CD4-positive, alpha-beta memory T cell (primary cell): ENCODE measurements at regions of chr14 and their contacts with region 1.

Region 1: GRCh38 chr14:50830932-50831725 is at the start of gene NIN:
- DNase-seq: peak; percentile 66 to 76 (median 74)
- H3K4me3 ChIP-seq: peak within 1 kb of the TSS; percentile 77 to 81
- H3K4me3 Mint-ChIP-seq: peak within 1 kb of the TSS; percentile 95 to 100 (median 97)
- H3K27ac ChIP-seq: peak within 1 kb of the TSS; percentile 62
- H3K27ac Mint-ChIP-seq: peak within 1 kb of the TSS; percentile 92 to 97 (median 96)
- H3K4me1 ChIP-seq: peaks cover 56% of the 10 kb centered on the region
- H3K4me1 Mint-ChIP-seq: peaks cover 45 to 72% (median 53%) of the 10 kb centered on the region in 4 donors
- H3K27me3 ChIP-seq: no peaks in the 10 kb centered on the region
- H3K27me3 Mint-ChIP-seq: no peaks in the 10 kb centered on the region
- total RNA-seq, gene NIN: 99.7 to 102 TPM

Region 2: GRCh38 chr14:50186107-50186506 is 645.0 kb before region 1 on chr14:
- CTCF ChIA-PET with region 1: no interaction called
- POLR2A ChIA-PET with region 1: no interaction called
- intact Hi-C with region 1: no loop called
- DNase-seq: no peak
- H3K4me3 ChIP-seq: no peak overlapping the region
- H3K4me3 Mint-ChIP-seq: no peak overlapping the region
- H3K27ac ChIP-seq: no peak overlapping the region
- H3K27ac Mint-ChIP-seq: no peak overlapping the region
- H3K4me1 ChIP-seq: no peaks in the 10 kb centered on the region
- H3K4me1 Mint-ChIP-seq: peaks cover 0 to 1% (median 0%) of the 10 kb centered on the region in 4 donors
- H3K27me3 ChIP-seq: no peaks in the 10 kb centered on the region
- H3K27me3 Mint-ChIP-seq: no peaks in the 10 kb centered on the region

Region 3: DNA sequence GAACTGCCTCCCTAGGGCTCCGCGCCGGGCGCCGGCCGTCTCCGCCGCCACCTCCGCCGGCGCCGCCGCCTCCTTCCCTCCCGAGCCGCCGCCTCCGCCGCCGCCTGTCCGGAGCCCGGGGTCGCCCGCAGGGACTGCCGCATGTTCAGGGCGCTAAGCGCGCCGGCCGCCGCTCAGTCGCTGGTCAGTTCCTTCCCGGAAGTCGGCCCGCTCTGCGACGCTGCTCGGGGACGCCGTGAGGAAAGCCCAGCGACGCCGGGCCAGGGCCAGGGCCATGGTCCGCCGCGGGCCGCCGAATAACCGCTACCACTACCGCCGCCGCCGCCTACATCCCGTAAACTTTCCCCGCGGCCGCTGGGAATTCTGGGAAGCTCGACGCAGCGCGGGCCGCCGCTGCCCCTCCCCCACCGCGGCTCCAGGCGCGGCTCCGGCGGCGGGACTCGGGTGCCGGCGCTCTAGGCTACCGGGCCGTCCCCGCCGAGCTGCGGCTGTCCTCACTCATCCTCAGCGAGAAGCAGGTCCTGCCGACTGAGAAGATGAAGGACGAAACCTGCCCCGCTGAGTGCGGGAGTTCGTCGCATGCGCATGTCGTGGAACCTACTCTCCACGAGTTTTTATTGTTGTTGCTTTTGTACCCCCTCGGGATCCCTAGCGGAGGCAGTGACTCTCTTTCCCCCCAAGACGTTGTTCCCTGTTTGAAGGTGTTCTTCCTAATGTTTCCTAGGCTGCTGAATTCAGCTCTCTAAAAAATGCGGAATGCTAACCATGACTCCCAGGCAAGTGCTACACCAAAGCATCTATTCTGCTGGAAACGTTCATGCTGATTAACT is 162.9 kb before region 1 on chr14 and contains the start of gene SAV1:
- CTCF ChIA-PET with region 1: no interaction called
- POLR2A ChIA-PET with region 1: no interaction called
- intact Hi-C with region 1: loop called (anchors 5 kb)
- DNase-seq: peak; percentile 41 to 50 (median 45)
- H3K4me3 ChIP-seq: peak within 1 kb of the TSS; percentile 48 to 70
- H3K4me3 Mint-ChIP-seq: peak within 1 kb of the TSS in 2 of 8 donors; percentile 94 to 96
- H3K27ac ChIP-seq: peak within 1 kb of the TSS; percentile 52
- H3K27ac Mint-ChIP-seq: peak within 1 kb of the TSS in 6 of 7 donors; percentile 89 to 95 (median 92)
- H3K4me1 ChIP-seq: peaks cover 19% of the 10 kb centered on the region
- H3K4me1 Mint-ChIP-seq: peaks cover 14 to 20% (median 20%) of the 10 kb centered on the region in 4 donors
- H3K27me3 ChIP-seq: no peaks in the 10 kb centered on the region
- H3K27me3 Mint-ChIP-seq: no peaks in the 10 kb centered on the region
- total RNA-seq, gene SAV1: 13.9 to 14.5 TPM

Region 4: GRCh38 chr14:50778721-50779483 is 52.2 kb before region 1 on chr14:
- CTCF ChIA-PET with region 1: interaction called, 16 read pairs
- POLR2A ChIA-PET with region 1: interaction called, 37 read pairs
- intact Hi-C with region 1: loop called (anchors 2 kb)
- DNase-seq: no peak
- H3K4me3 ChIP-seq: no peak overlapping the region
- H3K4me3 Mint-ChIP-seq: peak overlapping the region in 4 of 8 donors; percentile 7 to 77 (median 46)
- H3K27ac ChIP-seq: no peak overlapping the region
- H3K27ac Mint-ChIP-seq: peak overlapping the region; percentile 6 to 93 (median 82)
- H3K4me1 ChIP-seq: peaks cover 47% of the 10 kb centered on the region
- H3K4me1 Mint-ChIP-seq: peaks cover 34 to 73% (median 45%) of the 10 kb centered on the region in 4 donors
- H3K27me3 ChIP-seq: no peaks in the 10 kb centered on the region
- H3K27me3 Mint-ChIP-seq: no peaks in the 10 kb centered on the region

Region 5: DNA sequence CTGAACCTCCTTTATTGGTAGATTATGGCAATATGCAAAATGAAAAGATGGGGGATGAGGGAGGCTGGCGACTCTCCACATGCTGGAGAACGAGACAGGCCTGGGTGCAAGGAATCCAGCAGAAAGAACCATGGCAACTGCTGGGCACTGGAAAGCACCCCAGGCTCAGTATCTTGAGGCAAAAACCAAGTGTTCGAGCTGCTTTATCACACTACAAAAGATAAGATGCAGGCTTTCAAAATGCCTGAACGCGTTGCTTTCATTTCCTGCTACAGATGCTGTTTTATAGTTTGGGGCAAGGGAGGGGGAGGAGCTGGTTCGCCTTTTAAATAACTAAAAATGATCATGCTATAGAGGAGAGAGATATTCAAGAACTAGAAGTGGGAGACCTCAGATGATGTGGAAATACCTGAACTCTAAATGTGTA is 39.1 kb before region 1 on chr14:
- CTCF ChIA-PET with region 1: interaction called, 14 read pairs
- POLR2A ChIA-PET with region 1: interaction called, 37 read pairs
- intact Hi-C with region 1: loop called (anchors 2 kb)
- DNase-seq: peak in 2 of 5 donors; percentile 17 to 26
- H3K4me3 ChIP-seq: peak overlapping the region in 1 of 2 donors; percentile 48
- H3K4me3 Mint-ChIP-seq: peak overlapping the region; percentile 4 to 81 (median 74)
- H3K27ac ChIP-seq: peak overlapping the region; percentile 24
- H3K27ac Mint-ChIP-seq: peak overlapping the region; percentile 64 to 92 (median 88)
- H3K4me1 ChIP-seq: peaks cover 60% of the 10 kb centered on the region
- H3K4me1 Mint-ChIP-seq: peaks cover 56 to 86% (median 70%) of the 10 kb centered on the region in 4 donors
- H3K27me3 ChIP-seq: no peaks in the 10 kb centered on the region
- H3K27me3 Mint-ChIP-seq: no peaks in the 10 kb centered on the region

Region 6: GRCh38 chr14:51651388-51652167 is 820.4 kb after region 1 on chr14 and contains the start of gene FRMD6:
- CTCF ChIA-PET with region 1: no interaction called
- POLR2A ChIA-PET with region 1: no interaction called
- intact Hi-C with region 1: loop called (anchors 5 kb)
- DNase-seq: peak; percentile 82 to 89 (median 83)
- H3K4me3 ChIP-seq: peak within 1 kb of the TSS; percentile 47 to 77
- H3K4me3 Mint-ChIP-seq: peak within 1 kb of the TSS; percentile 82 to 92 (median 85)
- H3K27ac ChIP-seq: peak within 1 kb of the TSS; percentile 36
- H3K27ac Mint-ChIP-seq: peak within 1 kb of the TSS in 6 of 7 donors; percentile 66 to 84 (median 72)
- H3K4me1 ChIP-seq: peaks cover 19% of the 10 kb centered on the region
- H3K4me1 Mint-ChIP-seq: peaks cover 7 to 16% (median 11%) of the 10 kb centered on the region in 4 donors
- H3K27me3 ChIP-seq: peaks cover 14% of the 10 kb centered on the region
- H3K27me3 Mint-ChIP-seq: peaks cover 14 to 18% of the 10 kb centered on the region in 2 donors
- total RNA-seq, gene FRMD6: 0.80 to 0.81 TPM